ENCODE measurements at regions of chr17 and their contacts with region 1.

Region 1: DNA sequence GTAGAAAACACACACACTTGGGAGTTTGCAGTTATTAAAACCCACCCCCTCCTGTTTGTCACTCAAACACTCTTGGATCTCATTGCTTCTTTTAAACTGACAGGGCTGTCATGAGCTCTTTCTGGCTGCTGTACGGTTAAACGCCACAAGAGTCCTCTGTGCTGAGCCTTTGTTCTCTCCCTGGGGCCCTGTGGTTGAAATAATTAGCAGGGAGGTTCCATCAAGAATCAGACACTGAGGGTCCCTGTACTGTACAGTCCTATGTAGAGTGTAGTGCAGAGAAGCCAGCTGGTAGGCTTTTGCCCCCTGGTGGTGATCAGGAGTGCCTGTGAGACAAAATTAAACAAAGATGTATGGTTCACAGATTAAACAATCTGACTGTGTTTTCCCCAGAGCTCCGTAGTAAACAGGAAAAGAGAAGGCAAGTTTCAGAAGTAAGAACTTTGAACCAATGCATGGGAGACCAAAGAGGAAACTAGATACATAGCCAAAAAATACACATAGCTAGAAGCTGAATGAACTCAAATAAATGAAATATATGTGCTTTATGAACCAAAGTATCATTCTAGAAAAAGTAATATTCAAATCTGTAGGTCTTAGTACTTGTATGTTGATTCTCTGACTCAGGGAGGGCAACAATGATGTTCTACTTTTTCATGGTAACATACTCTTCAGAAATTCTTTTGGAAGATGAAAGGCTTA is 1.4 kb upstream of the SSH2 start:
- DNase-seq: peak; percentile 62
- ATAC-seq: peak; percentile 57
- H3K4me3 ChIP-seq: peak overlapping the region; percentile 85
- H3K27ac ChIP-seq: no peak overlapping the region
- H3K4me1 ChIP-seq: peaks cover 23% of the 10 kb centered on the region
- H3K27me3 ChIP-seq: no peaks in the 10 kb centered on the region
- CTCF ChIP-seq: peak; percentile 89

Region 2: GRCh38 chr17:29640413-29640812 is 291.0 kb before region 1 on chr17:
- CTCF ChIA-PET with region 1: interaction called, 15 read pairs
- POLR2A ChIA-PET with region 1: no interaction called
- intact Hi-C with region 1: loop called (anchors 1 kb)
- DNase-seq: no peak
- ATAC-seq: no peak
- H3K4me3 ChIP-seq: no peak overlapping the region
- H3K27ac ChIP-seq: no peak overlapping the region
- H3K4me1 ChIP-seq: peaks cover 14% of the 10 kb centered on the region
- H3K27me3 ChIP-seq: no peaks in the 10 kb centered on the region
- CTCF ChIP-seq: no peak

Region 3: DNA sequence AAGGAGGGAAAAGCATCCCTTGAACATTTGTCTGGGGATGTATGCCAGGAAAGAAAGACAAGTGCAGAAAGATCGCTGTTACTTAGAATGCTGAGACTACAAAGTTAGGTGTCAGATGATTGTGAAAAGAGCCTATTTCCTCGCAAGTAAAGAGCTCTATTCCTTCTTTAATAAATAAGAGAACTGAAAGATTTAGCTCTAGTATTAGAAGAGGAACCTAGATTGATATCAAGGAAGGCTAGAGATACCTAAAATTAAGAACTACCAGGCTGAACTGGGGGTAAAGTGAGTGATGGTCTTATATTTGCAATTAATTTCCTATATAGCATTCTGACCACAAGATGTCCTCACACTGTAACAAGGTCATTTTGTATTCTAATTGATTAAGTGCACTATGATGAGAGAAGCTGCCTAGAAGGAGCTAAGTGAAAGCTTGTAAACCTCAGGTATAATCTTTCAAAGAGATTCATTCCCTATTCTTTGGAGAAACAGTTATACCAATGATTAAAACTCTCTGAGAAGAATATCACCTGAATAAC is 63.7 kb before region 1 on chr17:
- CTCF ChIA-PET with region 1: interaction called, 37 read pairs
- POLR2A ChIA-PET with region 1: no interaction called
- intact Hi-C with region 1: loop called (anchors 2 kb)
- DNase-seq: peak; percentile 3
- ATAC-seq: no peak
- H3K4me3 ChIP-seq: no peak overlapping the region
- H3K27ac ChIP-seq: no peak overlapping the region
- H3K4me1 ChIP-seq: no peaks in the 10 kb centered on the region
- H3K27me3 ChIP-seq: no peaks in the 10 kb centered on the region
- CTCF ChIP-seq: peak; percentile 45; the same call in 1 of the 2 replicates

Region 4: DNA sequence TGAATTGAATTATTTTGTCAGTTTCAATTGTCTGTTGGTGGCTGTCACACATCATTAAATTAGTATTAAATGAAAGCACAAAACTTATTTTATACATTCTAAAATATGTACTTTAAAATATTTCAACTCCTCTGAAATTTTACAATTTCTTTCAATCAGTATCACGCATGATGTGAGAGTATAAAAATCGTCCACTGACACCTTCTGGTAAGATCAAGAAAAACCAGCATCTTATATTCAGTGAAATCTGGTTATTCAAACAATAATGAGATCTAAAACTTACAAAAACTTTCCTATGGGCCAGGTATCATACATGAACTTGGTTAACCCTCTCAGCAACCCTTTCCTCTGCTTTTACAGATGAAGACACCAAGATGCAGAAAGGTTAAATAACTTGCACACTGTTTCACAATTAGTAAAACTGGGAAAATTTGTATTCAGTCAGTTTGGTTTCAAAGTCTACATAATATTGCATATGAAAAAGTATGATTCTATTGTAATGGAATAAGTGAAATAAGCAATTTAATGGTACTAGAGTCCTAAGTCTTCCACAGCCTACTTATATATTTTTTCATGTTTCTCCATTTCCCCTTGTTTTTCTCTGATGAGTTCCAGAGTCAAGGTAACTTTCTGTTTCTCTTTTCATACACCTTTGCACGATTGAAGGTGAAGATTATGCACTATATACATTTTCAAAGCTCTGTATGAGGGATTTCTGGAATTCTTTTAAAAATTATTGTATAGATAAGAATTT is 68.8 kb after region 1 on chr17:
- CTCF ChIA-PET with region 1: interaction called, 3 read pairs
- POLR2A ChIA-PET with region 1: no interaction called
- intact Hi-C with region 1: loop called (anchors 5 kb)
- DNase-seq: peak; percentile 20
- ATAC-seq: peak; percentile 51
- H3K4me3 ChIP-seq: no peak overlapping the region
- H3K27ac ChIP-seq: no peak overlapping the region
- H3K4me1 ChIP-seq: peaks cover 13% of the 10 kb centered on the region
- H3K27me3 ChIP-seq: no peaks in the 10 kb centered on the region
- CTCF ChIP-seq: peak; percentile 37

Region 5: GRCh38 chr17:30093463-30094147 is 162.2 kb after region 1 on chr17:
- CTCF ChIA-PET with region 1: interaction called, 6 read pairs
- POLR2A ChIA-PET with region 1: no interaction called
- intact Hi-C with region 1: loop called (anchors 1 kb)
- DNase-seq: peak; percentile 75
- ATAC-seq: peak; percentile 71
- H3K4me3 ChIP-seq: no peak overlapping the region
- H3K27ac ChIP-seq: no peak overlapping the region
- H3K4me1 ChIP-seq: no peaks in the 10 kb centered on the region
- H3K27me3 ChIP-seq: peaks cover 3% of the 10 kb centered on the region; the same call in 1 of the 2 replicates
- CTCF ChIP-seq: peak; percentile 77

Measured in PC-3 (cell line).